Uterus (tissue), 4 donors: ENCODE measurements at regions of chr4 and their contacts with region 1.

Region 1: GRCh38 chr4:87465739-87466366 is 43.5 kb downstream of the NUDT9 start:
- DNase-seq: no peak
- H3K4me3 ChIP-seq: no peak overlapping the region
- H3K27ac ChIP-seq: peak overlapping the region; percentile 36 to 70
- H3K4me1 ChIP-seq: no peaks in the 10 kb centered on the region
- H3K27me3 ChIP-seq: no peaks in the 10 kb centered on the region
- CTCF ChIP-seq: peak; percentile 56 to 68 (median 64)
- POLR2A ChIP-seq: no peak

Region 2: GRCh38 chr4:87388901-87389300 is 77.0 kb before region 1 on chr4:
- intact Hi-C with region 1: loop called (anchors 10 kb)
- DNase-seq: no peak
- H3K4me3 ChIP-seq: peak overlapping the region in 1 of 2 donors; percentile 59
- H3K27ac ChIP-seq: peak overlapping the region; percentile 94 to 97
- H3K4me1 ChIP-seq: no peaks in the 10 kb centered on the region
- H3K27me3 ChIP-seq: no peaks in the 10 kb centered on the region
- CTCF ChIP-seq: no peak
- POLR2A ChIP-seq: no peak

Region 3: GRCh38 chr4:88054901-88055300 is 589.0 kb after region 1 on chr4:
- intact Hi-C with region 1: no loop called
- DNase-seq: no peak
- H3K4me3 ChIP-seq: no peak overlapping the region
- H3K27ac ChIP-seq: no peak overlapping the region
- H3K4me1 ChIP-seq: no peaks in the 10 kb centered on the region
- H3K27me3 ChIP-seq: no peaks in the 10 kb centered on the region
- CTCF ChIP-seq: peak; percentile 8 to 54 (median 30)
- POLR2A ChIP-seq: no peak